ENCODE measurements at regions of chr5 and their contacts with region 1.

Region 1: DNA sequence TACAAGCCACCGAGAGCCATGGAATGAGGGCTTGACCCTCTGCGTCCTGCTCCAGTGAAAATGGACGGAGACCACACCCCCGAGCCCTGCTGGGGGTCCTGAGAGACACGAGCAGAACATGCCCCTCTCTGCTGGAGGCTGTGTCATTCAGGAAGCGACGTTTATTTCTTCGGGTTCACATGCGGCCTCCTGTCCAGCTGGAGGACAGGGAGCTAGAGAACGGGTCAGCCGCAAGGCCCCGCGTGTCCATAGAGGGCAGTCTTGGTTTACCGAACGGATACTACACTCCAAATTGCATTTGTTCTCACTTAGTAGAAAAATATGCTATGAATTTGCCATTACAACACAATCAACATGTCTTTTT is 36.1 kb downstream of the MRPL36 start:
- DNase-seq: peak; percentile 38
- ATAC-seq: peak; percentile 91
- H3K4me3 ChIP-seq: no peak overlapping the region
- H3K27ac ChIP-seq: no peak overlapping the region
- H3K4me1 ChIP-seq: no peaks in the 10 kb centered on the region
- H3K27me3 ChIP-seq: no peaks in the 10 kb centered on the region
- CTCF ChIP-seq: peak; percentile 62 to 89 (median 82); a peak in 5 of 6 replicates
- POLR2A ChIP-seq: no peak
- RAD21 ChIP-seq: peak; percentile 81

Region 2: DNA sequence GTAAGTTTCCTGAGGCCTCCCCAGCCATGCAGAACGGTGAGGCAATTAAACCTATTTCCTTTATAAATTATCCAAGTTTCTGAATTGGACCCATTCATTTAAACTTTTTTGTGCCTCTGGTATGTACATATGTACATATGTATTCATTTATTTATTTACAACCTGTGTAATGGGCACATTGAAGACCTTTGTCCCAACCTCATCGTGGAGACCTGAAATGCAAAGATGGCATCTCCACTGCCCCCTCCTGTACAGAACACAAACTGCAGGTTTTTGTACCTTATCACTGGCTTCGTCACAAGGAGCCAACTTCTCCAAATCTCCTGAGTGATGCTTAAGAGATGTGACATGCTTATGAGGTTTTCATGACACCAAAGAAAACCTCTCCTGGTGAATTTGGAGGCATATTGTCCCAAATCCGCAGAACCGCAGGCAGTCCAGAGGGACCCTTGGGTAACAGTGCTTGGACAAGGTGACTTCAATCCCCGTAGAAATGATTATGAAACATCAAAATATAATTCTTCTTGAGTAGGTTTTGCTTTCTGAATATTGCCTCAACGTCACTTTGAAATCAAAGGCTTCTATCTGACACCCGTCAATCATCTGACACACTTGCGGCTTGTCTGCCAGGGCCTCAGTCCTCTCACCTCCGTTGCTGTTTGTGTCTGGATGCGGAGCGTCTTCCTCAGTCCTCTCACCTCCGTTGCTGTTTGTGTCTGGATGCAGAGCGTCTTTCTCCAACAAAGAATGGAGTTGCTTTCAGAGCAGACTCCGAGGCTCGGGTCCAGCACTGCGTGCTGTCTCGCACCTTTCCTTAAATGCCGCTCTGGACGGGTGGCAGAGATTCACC is 254.2 kb after region 1 on chr5:
- CTCF ChIA-PET with region 1: interaction called, 5 read pairs
- POLR2A ChIA-PET with region 1: no interaction called
- RAD21 ChIA-PET with region 1: no interaction called
- intact Hi-C with region 1: loop called (anchors 1 kb)
- DNase-seq: peak; percentile 33
- ATAC-seq: peak; percentile 77
- H3K4me3 ChIP-seq: no peak overlapping the region
- H3K27ac ChIP-seq: no peak overlapping the region
- H3K4me1 ChIP-seq: no peaks in the 10 kb centered on the region
- H3K27me3 ChIP-seq: peaks cover 22% of the 10 kb centered on the region
- CTCF ChIP-seq: peak; percentile 48 to 75 (median 69); a peak in 5 of 6 replicates
- POLR2A ChIP-seq: no peak
- RAD21 ChIP-seq: peak; percentile 62

Region 3: DNA sequence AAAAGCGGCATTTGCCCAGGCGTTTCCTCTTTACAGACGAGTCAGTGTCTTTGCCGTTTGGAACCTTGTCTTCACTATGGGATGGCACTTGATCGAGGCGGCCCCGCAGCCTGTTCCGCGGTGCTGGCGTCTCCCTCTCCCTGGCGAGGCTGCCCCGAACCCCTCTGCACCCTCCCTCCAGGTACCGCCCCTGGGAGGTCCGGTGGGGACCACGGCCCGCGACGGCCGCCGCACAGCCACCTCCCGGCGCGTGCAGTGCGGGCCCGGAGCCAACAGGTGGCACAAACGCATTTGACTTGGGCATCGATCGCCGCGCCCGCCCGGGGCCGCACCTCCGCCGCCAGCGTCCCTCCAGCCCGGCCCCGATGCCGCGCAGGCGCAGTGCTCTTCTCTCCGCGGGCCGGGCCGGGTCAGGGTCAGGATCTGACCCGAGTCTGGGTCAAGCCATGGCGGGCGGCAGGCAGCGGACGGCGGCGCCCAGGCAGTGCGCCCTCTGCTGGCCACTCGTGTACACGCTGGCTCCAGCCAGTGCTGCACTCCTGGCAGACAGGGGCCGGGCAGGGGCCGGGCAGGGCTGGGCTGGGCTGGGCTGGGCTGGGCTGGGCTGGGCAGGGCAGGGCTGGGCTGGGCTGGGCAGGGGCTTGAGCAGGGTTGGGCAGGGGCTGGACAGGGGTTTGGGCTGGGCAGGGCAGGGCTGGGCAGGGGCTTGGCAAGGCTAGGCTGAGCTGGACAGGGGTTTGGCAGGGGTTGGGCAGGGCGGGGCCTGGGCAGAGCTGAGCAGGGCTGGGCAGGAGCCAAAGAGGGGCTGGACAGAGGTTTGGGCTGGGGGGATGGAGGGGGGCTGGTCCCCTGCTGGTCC is 275.0 kb after region 1 on chr5:
- CTCF ChIA-PET with region 1: interaction called, 8 read pairs
- POLR2A ChIA-PET with region 1: no interaction called
- RAD21 ChIA-PET with region 1: no interaction called
- intact Hi-C with region 1: loop called (anchors 1 kb)
- DNase-seq: peak; percentile 33
- ATAC-seq: peak; percentile 98
- H3K4me3 ChIP-seq: peak overlapping the region in 1 of 2 experiments; percentile 34; a peak in 1 of 4 replicates
- H3K27ac ChIP-seq: no peak overlapping the region
- H3K4me1 ChIP-seq: peaks cover 5 to 7% of the 10 kb centered on the region in 2 experiments; a peak in 3 of 4 replicates
- H3K27me3 ChIP-seq: peaks cover 43% of the 10 kb centered on the region
- CTCF ChIP-seq: peak; percentile 75 to 96 (median 79)
- POLR2A ChIP-seq: no peak
- RAD21 ChIP-seq: peak; percentile 60